Heart right ventricle (tissue), 16 donors: ENCODE measurements at regions of chr13 and their contacts with region 1.

Region 1: DNA sequence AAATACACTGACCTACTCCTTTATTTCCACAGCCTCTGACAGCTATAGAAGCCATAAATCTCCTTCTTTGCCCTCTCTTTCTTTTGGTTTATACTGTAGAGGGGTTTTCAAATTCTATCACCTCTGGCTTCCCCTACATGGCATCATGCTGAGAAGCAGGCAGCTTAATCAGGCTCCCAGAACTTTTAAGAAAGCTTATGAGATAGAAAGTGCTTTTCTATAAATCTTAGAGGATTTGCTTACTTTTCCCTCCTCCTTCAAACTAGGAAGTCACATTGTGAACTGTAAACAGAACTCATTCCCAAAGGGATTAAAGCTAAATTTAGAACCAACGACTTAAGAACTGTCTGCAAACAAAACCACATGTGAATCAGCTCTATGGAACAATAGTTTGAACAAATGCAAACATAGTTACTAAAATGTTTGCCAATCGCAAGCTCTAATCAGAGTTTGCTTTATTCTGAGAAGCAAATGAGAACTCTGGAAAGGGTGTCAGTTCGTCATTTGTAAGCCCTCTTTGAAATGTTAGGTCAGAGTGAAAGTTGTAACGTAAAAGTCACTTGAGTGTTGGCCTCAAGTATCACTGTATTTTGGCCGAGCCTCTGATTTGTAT is 344.1 kb downstream of the RFC3 start:
- DNase-seq: no peak
- ATAC-seq: peak; percentile 51 to 87 (median 78)
- H3K4me3 ChIP-seq: peak overlapping the region in 5 of 10 donors; percentile 6 to 29 (median 20)
- H3K27ac ChIP-seq: peak overlapping the region; percentile 50 to 80 (median 72)
- H3K4me1 ChIP-seq: peaks cover 0 to 34% (median 26%) of the 10 kb centered on the region in 9 donors
- H3K27me3 ChIP-seq: no peaks in the 10 kb centered on the region
- CTCF ChIP-seq: no peak

Region 2: DNA sequence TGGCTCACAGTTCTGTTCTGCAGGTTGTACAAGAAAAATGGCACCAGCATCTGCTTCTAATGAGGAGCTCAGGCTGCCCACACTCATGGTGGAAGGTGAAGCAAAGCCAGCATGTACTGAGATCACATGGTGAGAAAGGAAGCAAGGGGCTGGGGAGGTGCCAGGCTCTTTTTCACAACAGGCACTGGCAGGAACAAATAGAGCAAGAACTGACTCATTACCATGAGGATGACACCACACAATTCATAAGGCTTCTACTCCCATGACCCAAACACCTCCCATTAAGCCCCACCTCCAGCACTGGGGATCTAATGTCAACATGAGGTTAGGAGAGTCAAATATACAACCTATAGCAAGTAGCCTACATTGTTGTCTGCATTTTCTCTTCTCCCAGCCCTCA is 178.5 kb after region 1 on chr13:
- intact Hi-C with region 1: no loop called
- DNase-seq: no peak
- ATAC-seq: no peak
- H3K4me3 ChIP-seq: no peak overlapping the region
- H3K27ac ChIP-seq: no peak overlapping the region
- H3K4me1 ChIP-seq: no peaks in the 10 kb centered on the region
- H3K27me3 ChIP-seq: no peaks in the 10 kb centered on the region
- CTCF ChIP-seq: no peak

Region 3: GRCh38 chr13:34750078-34750931 is 588.3 kb after region 1 on chr13:
- intact Hi-C with region 1: loop called in 1 of 10 experiments (anchors 10 kb)
- DNase-seq: peak; percentile 26 to 45
- ATAC-seq: peak in 5 of 8 donors; percentile 12 to 56 (median 33)
- H3K4me3 ChIP-seq: peak overlapping the region in 7 of 10 donors; percentile 17 to 44 (median 39)
- H3K27ac ChIP-seq: peak overlapping the region in 2 of 10 donors; percentile 17 to 81
- H3K4me1 ChIP-seq: peaks cover 11 to 42% (median 28%) of the 10 kb centered on the region in 9 donors
- H3K27me3 ChIP-seq: no peaks in the 10 kb centered on the region
- CTCF ChIP-seq: no peak